B cell (primary cell): ENCODE measurements at regions of chr17 and their contacts with region 1.

Region 1: GRCh38 chr17:12395733-12396354 is 269.8 kb upstream of the MYOCD start:
- DNase-seq: no peak
- ATAC-seq: no peak
- H3K4me3 ChIP-seq: no peak overlapping the region
- H3K4me3 Mint-ChIP-seq: no peak overlapping the region
- H3K27ac ChIP-seq: no peak overlapping the region
- H3K27ac Mint-ChIP-seq: no peak overlapping the region
- H3K4me1 ChIP-seq: no peaks in the 10 kb centered on the region
- H3K4me1 Mint-ChIP-seq: no peaks in the 10 kb centered on the region
- H3K27me3 ChIP-seq: no peaks in the 10 kb centered on the region
- H3K27me3 Mint-ChIP-seq: no peaks in the 10 kb centered on the region
- CTCF ChIP-seq: peak; percentile 37

Region 2: GRCh38 chr17:12545877-12546513 is 150.2 kb after region 1 on chr17:
- CTCF ChIA-PET with region 1: interaction called, 11 read pairs
- POLR2A ChIA-PET with region 1: no interaction called
- intact Hi-C with region 1: no loop called
- DNase-seq: peak; percentile 35
- ATAC-seq: peak; percentile 43
- H3K4me3 ChIP-seq: no peak overlapping the region
- H3K4me3 Mint-ChIP-seq: no peak overlapping the region
- H3K27ac ChIP-seq: no peak overlapping the region
- H3K27ac Mint-ChIP-seq: no peak overlapping the region
- H3K4me1 ChIP-seq: no peaks in the 10 kb centered on the region
- H3K4me1 Mint-ChIP-seq: no peaks in the 10 kb centered on the region
- H3K27me3 ChIP-seq: no peaks in the 10 kb centered on the region
- H3K27me3 Mint-ChIP-seq: peaks cover 5% of the 10 kb centered on the region
- CTCF ChIP-seq: peak; percentile 75